ENCODE measurements at regions of chr1 and their contacts with region 1.

Region 1: GRCh38 chr1:40257688-40258444 is at the start of gene ZMPSTE24:
- DNase-seq: peak; percentile 84 to 98 (median 95)
- ATAC-seq: peak; percentile 98
- H3K4me3 ChIP-seq: peak within 1 kb of the TSS; percentile 98
- H3K4me3 Mint-ChIP-seq: peak within 1 kb of the TSS; percentile 91 to 100 (median 98)
- H3K27ac ChIP-seq: peak within 1 kb of the TSS; percentile 98
- H3K27ac Mint-ChIP-seq: peak within 1 kb of the TSS; percentile 97 to 100 (median 100)
- H3K4me1 ChIP-seq: peaks cover 14% of the 10 kb centered on the region in 2 donors
- H3K4me1 Mint-ChIP-seq: peaks cover 27 to 71% (median 60%) of the 10 kb centered on the region in 7 donors
- H3K27me3 ChIP-seq: no peaks in the 10 kb centered on the region
- H3K27me3 Mint-ChIP-seq: peaks cover 0 to 4% (median 0%) of the 10 kb centered on the region in 5 donors
- total RNA-seq, gene ZMPSTE24: 9.5 to 31.0 (median 14.1) TPM

Region 2: GRCh38 chr1:40153073-40153770 is 104.6 kb before region 1 on chr1:
- CTCF ChIA-PET with region 1: interaction called, 4 read pairs
- POLR2A ChIA-PET with region 1: no interaction called
- intact Hi-C with region 1: loop called (anchors 2 kb)
- DNase-seq: peak in 7 of 9 donors; percentile 26 to 68 (median 53)
- ATAC-seq: peak; percentile 88
- H3K4me3 ChIP-seq: no peak overlapping the region
- H3K4me3 Mint-ChIP-seq: peak overlapping the region in 7 of 10 donors; percentile 18 to 70 (median 52)
- H3K27ac ChIP-seq: no peak overlapping the region
- H3K27ac Mint-ChIP-seq: peak overlapping the region in 8 of 9 donors; percentile 16 to 88 (median 76)
- H3K4me1 ChIP-seq: no peaks in the 10 kb centered on the region
- H3K4me1 Mint-ChIP-seq: peaks cover 0 to 12% (median 10%) of the 10 kb centered on the region in 7 donors
- H3K27me3 ChIP-seq: no peaks in the 10 kb centered on the region
- H3K27me3 Mint-ChIP-seq: peaks cover 0 to 25% (median 0%) of the 10 kb centered on the region in 5 donors

Region 3: GRCh38 chr1:40232444-40232843 is 25.4 kb before region 1 on chr1:
- CTCF ChIA-PET with region 1: no interaction called
- POLR2A ChIA-PET with region 1: no interaction called
- intact Hi-C with region 1: loop called in 1 of 2 experiments (anchors 1 kb)
- DNase-seq: peak in 7 of 9 donors; percentile 10 to 53 (median 36)
- ATAC-seq: peak; percentile 27
- H3K4me3 ChIP-seq: no peak overlapping the region
- H3K4me3 Mint-ChIP-seq: peak overlapping the region in 1 of 10 donors; percentile 61
- H3K27ac ChIP-seq: no peak overlapping the region
- H3K27ac Mint-ChIP-seq: peak overlapping the region in 3 of 9 donors; percentile 7 to 81 (median 32)
- H3K4me1 ChIP-seq: no peaks in the 10 kb centered on the region
- H3K4me1 Mint-ChIP-seq: peaks cover 0 to 52% (median 10%) of the 10 kb centered on the region in 7 donors
- H3K27me3 ChIP-seq: no peaks in the 10 kb centered on the region
- H3K27me3 Mint-ChIP-seq: no peaks in the 10 kb centered on the region

Region 4: GRCh38 chr1:40373338-40374283 is 115.7 kb after region 1 on chr1 and contains the start of gene SMAP2:
- CTCF ChIA-PET with region 1: interaction called, 3 read pairs
- POLR2A ChIA-PET with region 1: no interaction called
- intact Hi-C with region 1: loop called in 1 of 2 experiments (anchors 5 kb)
- DNase-seq: peak; percentile 94 to 98 (median 96)
- ATAC-seq: peak; percentile 91
- H3K4me3 ChIP-seq: peak within 1 kb of the TSS; percentile 99
- H3K4me3 Mint-ChIP-seq: peak within 1 kb of the TSS; percentile 94 to 100 (median 99)
- H3K27ac ChIP-seq: peak within 1 kb of the TSS; percentile 99
- H3K27ac Mint-ChIP-seq: peak within 1 kb of the TSS; percentile 97 to 100 (median 99)
- H3K4me1 ChIP-seq: peaks cover 33 to 36% of the 10 kb centered on the region in 2 donors
- H3K4me1 Mint-ChIP-seq: peaks cover 43 to 66% (median 54%) of the 10 kb centered on the region in 7 donors
- H3K27me3 ChIP-seq: no peaks in the 10 kb centered on the region
- H3K27me3 Mint-ChIP-seq: peaks cover 0 to 4% (median 0%) of the 10 kb centered on the region in 5 donors
- total RNA-seq, gene SMAP2: 144 to 210 (median 187) TPM

Region 5: GRCh38 chr1:40449684-40450494 is 192.0 kb after region 1 on chr1 and contains the start of gene ZFP69B:
- CTCF ChIA-PET with region 1: no interaction called
- POLR2A ChIA-PET with region 1: interaction called, 3 read pairs
- intact Hi-C with region 1: loop called (anchors 1 to 5 kb)
- DNase-seq: peak; percentile 73 to 97 (median 82)
- ATAC-seq: peak; percentile 91
- H3K4me3 ChIP-seq: peak within 1 kb of the TSS; percentile 90
- H3K4me3 Mint-ChIP-seq: peak within 1 kb of the TSS; percentile 83 to 96 (median 93)
- H3K27ac ChIP-seq: peak within 1 kb of the TSS; percentile 65
- H3K27ac Mint-ChIP-seq: peak within 1 kb of the TSS; percentile 84 to 94 (median 92)
- H3K4me1 ChIP-seq: peaks cover 11 to 19% of the 10 kb centered on the region in 2 donors
- H3K4me1 Mint-ChIP-seq: peaks cover 14 to 30% (median 25%) of the 10 kb centered on the region in 7 donors
- H3K27me3 ChIP-seq: no peaks in the 10 kb centered on the region
- H3K27me3 Mint-ChIP-seq: no peaks in the 10 kb centered on the region
- total RNA-seq, gene ZFP69B: 2.2 to 8.3 (median 5.3) TPM

Region 6: DNA sequence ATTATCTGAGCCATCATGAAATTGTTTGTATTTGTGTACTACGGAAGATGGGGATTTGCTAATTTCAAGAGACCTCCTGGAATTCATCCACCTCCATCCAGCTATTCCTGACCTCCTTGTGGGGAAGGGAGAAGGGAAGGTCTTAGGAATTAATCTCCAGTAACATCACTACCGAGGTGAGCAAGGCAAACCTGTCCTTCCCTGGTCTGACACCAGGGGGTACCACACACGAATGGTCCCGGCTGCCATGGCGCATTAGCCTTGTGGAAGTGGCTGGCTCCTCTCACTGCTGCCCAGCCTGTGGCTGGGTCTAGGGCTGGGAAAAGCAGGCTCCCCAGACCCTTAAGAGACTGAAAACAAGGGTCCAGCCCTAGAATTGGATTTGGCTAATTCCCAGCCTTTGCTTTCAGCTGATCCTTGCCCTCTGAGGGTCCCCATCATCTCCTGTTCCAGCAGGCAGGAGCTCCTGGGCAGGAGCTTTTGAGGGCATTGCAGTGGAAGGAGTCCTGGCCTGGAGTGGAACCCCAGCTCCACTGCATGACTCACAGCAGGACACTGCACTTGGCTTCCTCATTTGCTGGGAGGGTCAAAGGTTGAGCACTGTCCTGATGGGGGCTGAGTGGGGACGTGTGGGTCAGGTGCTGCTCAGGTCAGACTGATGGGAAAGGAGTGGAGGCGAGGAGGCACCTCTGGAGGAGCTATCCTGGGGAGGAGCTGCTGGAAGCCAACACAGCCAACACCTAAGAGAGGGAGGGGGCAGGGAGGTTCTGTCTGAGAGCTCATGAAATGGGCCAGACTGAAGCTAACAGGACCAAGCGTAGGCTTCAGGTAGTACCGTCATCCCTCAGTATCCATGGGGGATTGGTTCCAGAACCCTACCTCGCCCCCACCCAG is 372.9 kb after region 1 on chr1:
- CTCF ChIA-PET with region 1: no interaction called
- POLR2A ChIA-PET with region 1: no interaction called
- intact Hi-C with region 1: no loop called
- DNase-seq: no peak
- ATAC-seq: no peak
- H3K4me3 ChIP-seq: no peak overlapping the region
- H3K4me3 Mint-ChIP-seq: no peak overlapping the region
- H3K27ac ChIP-seq: no peak overlapping the region
- H3K27ac Mint-ChIP-seq: peak overlapping the region in 1 of 9 donors; percentile 62
- H3K4me1 ChIP-seq: peaks cover 0 to 21% of the 10 kb centered on the region in 2 donors
- H3K4me1 Mint-ChIP-seq: peaks cover 0 to 30% (median 9%) of the 10 kb centered on the region in 7 donors
- H3K27me3 ChIP-seq: no peaks in the 10 kb centered on the region
- H3K27me3 Mint-ChIP-seq: no peaks in the 10 kb centered on the region